IMR-90 (cell line): ENCODE measurements at regions of chr9 and their contacts with region 1.

Region 1: DNA sequence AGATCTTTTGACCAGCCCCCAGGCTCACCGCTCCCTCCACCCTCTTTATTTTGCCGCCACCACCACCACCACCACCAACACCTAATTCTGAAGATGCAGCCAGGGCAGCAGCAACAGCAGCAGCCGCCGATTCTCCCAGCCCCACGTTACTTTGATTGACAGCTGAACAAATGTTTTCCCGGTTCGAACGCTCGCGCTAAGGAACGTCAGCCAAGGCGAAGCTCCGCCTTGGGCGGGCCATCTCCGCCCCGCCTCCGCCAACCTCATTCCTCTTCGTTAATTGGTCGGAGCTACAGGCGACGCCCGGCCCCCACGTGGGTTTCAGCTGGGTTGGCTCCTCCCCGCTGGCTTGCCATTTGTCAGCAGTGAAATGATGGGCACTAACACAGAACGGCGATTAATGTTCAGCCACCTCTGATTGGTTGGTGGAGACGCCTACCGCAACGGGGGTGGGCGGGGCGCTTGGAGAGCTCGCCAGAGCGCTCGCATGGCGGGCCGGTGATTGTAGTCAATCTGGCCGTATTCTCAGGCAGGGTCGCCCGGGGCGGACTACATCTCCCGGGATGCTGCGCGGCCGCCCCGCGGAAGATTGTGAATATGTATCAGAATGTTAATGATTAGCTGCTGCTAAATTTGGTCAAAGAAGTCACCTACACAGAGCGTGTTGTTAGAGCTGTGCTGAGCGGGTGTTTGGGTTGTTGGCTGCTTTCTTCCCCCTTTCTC is at the start of gene TLE4:
- DNase-seq: peak; percentile 100
- ATAC-seq: peak; percentile 90
- H3K4me3 ChIP-seq: peak within 1 kb of the TSS; percentile 83
- H3K27ac ChIP-seq: peak within 1 kb of the TSS; percentile 77
- H3K4me1 ChIP-seq: peaks cover 2% of the 10 kb centered on the region; the same call in 1 of the 2 replicates
- H3K27me3 ChIP-seq: no peaks in the 10 kb centered on the region
- CTCF ChIP-seq: no peak
- POLR2A ChIP-seq: peak; percentile 98
- RAD21 ChIP-seq: 0 out of 2 replicates have a peak, but pooled peaks have one; percentile 1
- total RNA-seq, gene TLE4: 76.9 and 78.1 TPM in 2 replicates

Region 2: GRCh38 chr9:78369639-78370219 is 1201.7 kb before region 1 on chr9:
- CTCF ChIA-PET with region 1: no interaction called
- POLR2A ChIA-PET with region 1: no interaction called
- dilution Hi-C with region 1: no loop called
- in situ Hi-C with region 1: no loop called
- intact Hi-C with region 1: loop called (anchors 10 kb)
- DNase-seq: peak; percentile 69
- ATAC-seq: peak; percentile 91
- H3K4me3 ChIP-seq: no peak overlapping the region
- H3K27ac ChIP-seq: no peak overlapping the region
- H3K4me1 ChIP-seq: no peaks in the 10 kb centered on the region
- H3K27me3 ChIP-seq: peaks cover 10% of the 10 kb centered on the region
- CTCF ChIP-seq: peak; percentile 72
- POLR2A ChIP-seq: no peak
- RAD21 ChIP-seq: peak; percentile 47

Region 3: GRCh38 chr9:78601957-78602565 is 969.4 kb before region 1 on chr9:
- CTCF ChIA-PET with region 1: no interaction called
- POLR2A ChIA-PET with region 1: no interaction called
- dilution Hi-C with region 1: no loop called
- in situ Hi-C with region 1: loop called (anchors 25 kb)
- intact Hi-C with region 1: loop called (anchors 5 kb)
- DNase-seq: peak; percentile 66
- ATAC-seq: peak; percentile 81
- H3K4me3 ChIP-seq: no peak overlapping the region
- H3K27ac ChIP-seq: no peak overlapping the region
- H3K4me1 ChIP-seq: peaks cover 6% of the 10 kb centered on the region
- H3K27me3 ChIP-seq: no peaks in the 10 kb centered on the region
- CTCF ChIP-seq: peak; percentile 79
- POLR2A ChIP-seq: no peak
- RAD21 ChIP-seq: peak; percentile 86

Region 4: GRCh38 chr9:79129865-79130480 is 441.5 kb before region 1 on chr9:
- CTCF ChIA-PET with region 1: interaction called, 3 read pairs
- POLR2A ChIA-PET with region 1: interaction called, 27 read pairs
- dilution Hi-C with region 1: no loop called
- in situ Hi-C with region 1: loop called (anchors 25 kb)
- intact Hi-C with region 1: loop called (anchors 1 kb)
- DNase-seq: peak; percentile 67
- ATAC-seq: peak; percentile 88
- H3K4me3 ChIP-seq: no peak overlapping the region
- H3K27ac ChIP-seq: no peak overlapping the region
- H3K4me1 ChIP-seq: no peaks in the 10 kb centered on the region; the same call in 1 of the 2 replicates
- H3K27me3 ChIP-seq: no peaks in the 10 kb centered on the region
- CTCF ChIP-seq: peak; percentile 92
- POLR2A ChIP-seq: 0 out of 2 replicates have a peak, but pooled peaks have one; percentile 25
- RAD21 ChIP-seq: peak; percentile 98

Region 5: DNA sequence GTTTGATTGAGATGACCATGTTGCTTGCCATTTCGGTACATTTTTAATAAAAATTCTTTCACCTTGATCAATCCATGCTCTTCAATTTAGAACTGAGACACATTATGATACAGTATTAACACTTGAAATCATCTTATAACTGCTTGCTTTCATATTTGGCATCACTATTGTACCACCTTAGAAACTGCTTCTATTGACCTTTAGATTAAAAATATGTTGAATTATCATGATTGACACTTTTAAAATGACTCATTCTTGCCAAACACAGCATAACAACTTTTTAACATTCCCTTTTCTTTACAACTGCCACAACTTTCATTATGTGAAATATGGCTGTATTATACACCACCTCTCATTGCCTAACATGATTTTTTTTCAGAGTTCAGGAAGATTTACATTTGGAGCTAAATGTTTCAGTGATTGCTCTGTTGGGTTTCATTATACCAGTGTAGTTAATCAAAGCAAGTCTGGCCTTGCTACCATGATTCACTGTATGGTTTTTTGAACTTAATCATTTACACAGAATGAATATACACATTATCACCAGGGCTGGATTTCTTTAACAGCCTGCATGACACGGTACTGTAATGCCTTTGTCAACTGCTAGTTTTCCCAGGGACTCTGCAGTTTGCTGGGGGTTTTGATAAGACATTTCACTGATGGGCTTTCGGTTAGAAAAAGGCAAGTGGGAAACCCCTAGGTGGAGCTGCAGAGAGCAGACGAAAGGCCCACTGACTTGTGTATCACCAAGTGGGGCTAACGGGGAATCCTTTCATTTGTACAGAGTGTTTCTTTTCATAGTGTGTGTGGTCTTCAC is 93.3 kb before region 1 on chr9:
- CTCF ChIA-PET with region 1: no interaction called
- POLR2A ChIA-PET with region 1: no interaction called
- dilution Hi-C with region 1: no loop called
- in situ Hi-C with region 1: no loop called
- intact Hi-C with region 1: loop called (anchors 5 kb)
- DNase-seq: peak; percentile 29
- ATAC-seq: peak; percentile 58
- H3K4me3 ChIP-seq: no peak overlapping the region
- H3K27ac ChIP-seq: peak overlapping the region; percentile 8; the same call in 1 of the 2 replicates
- H3K4me1 ChIP-seq: peaks cover 6% of the 10 kb centered on the region
- H3K27me3 ChIP-seq: no peaks in the 10 kb centered on the region
- CTCF ChIP-seq: peak; percentile 35
- POLR2A ChIP-seq: no peak
- RAD21 ChIP-seq: no peak; the same call in 1 of the 2 replicates

Region 6: DNA sequence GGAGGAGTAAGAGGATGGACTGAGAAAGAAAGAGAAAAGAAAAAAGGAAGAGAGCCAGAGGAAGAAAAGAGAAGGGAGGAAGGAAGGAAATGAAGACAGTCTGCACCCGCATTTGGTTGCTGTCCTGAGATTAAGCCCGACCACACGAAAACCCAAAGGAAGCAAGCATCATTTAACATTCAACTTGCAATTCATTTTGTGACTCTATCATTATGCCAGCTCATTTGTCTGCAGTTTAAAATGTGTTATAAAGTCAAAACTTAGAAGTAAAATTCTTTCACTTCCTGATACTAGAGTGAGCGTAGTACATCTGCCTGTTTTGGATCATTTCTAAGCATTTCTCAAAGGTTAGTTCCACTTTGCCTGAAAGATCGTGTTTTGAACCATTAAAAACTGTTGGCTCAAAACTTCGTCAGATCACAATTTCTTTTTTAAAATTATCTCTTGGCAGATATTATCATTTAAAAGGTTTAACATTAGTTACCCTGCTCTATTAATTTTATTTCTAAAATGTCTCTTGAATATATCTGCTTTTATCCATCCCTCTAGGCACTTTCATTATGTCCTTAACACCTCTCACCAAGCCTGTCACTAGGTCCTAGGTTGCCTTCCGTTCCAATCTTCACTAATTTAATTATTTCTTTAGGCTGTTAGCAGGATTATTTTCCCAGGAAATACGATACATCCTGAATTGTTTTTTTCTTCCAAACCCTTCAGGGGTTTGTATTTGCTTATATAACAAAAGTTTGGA is 241.2 kb after region 1 on chr9:
- CTCF ChIA-PET with region 1: no interaction called
- POLR2A ChIA-PET with region 1: no interaction called
- dilution Hi-C with region 1: no loop called
- in situ Hi-C with region 1: no loop called
- intact Hi-C with region 1: loop called (anchors 5 kb)
- DNase-seq: no peak
- ATAC-seq: no peak
- H3K4me3 ChIP-seq: no peak overlapping the region
- H3K27ac ChIP-seq: no peak overlapping the region
- H3K4me1 ChIP-seq: peaks cover 4% of the 10 kb centered on the region; the same call in 1 of the 2 replicates
- H3K27me3 ChIP-seq: peaks cover 6% of the 10 kb centered on the region; the same call in 1 of the 2 replicates
- CTCF ChIP-seq: no peak
- POLR2A ChIP-seq: no peak
- RAD21 ChIP-seq: no peak

Region 7: DNA sequence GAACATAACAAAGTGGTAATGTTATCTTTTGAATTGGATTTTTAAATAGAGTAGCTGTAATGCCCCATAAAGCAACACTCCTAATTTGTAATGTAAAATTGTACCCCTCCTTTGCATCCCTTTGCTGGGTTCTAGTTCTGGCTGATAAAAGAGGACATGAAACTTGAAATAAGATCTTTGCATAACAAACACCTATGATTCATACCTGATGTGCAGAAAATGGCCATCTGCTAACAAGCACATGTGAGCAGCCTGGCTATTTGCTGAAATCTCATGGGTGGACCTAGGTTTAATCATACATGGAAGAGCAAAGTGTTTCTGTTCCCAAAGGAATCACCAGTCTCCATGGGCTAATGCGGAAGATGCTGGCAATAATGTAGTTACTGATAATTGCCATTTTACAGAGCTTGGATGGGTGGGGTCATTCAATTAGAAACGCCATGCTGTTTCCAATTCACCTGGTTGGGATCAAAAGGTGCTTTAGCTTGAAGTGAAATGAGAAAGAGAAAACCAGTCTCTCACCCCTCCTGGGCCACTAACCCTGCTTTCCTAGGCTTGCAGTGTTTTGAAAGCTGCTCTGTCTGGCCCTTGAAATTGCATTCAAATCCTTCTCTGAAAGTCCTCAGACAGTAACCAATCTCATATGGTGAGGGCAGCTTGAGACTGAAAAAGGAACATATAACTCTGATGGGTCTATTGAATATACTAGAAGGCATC is 585.4 kb after region 1 on chr9:
- CTCF ChIA-PET with region 1: no interaction called
- POLR2A ChIA-PET with region 1: no interaction called
- dilution Hi-C with region 1: no loop called
- in situ Hi-C with region 1: no loop called
- intact Hi-C with region 1: loop called (anchors 10 kb)
- DNase-seq: peak; percentile 15
- ATAC-seq: no peak
- H3K4me3 ChIP-seq: no peak overlapping the region
- H3K27ac ChIP-seq: no peak overlapping the region
- H3K4me1 ChIP-seq: peaks cover 6% of the 10 kb centered on the region
- H3K27me3 ChIP-seq: no peaks in the 10 kb centered on the region; the same call in 1 of the 2 replicates
- CTCF ChIP-seq: no peak
- POLR2A ChIP-seq: no peak
- RAD21 ChIP-seq: no peak